ENCODE measurements at regions of chr6 and their contacts with region 1.

Region 1: DNA sequence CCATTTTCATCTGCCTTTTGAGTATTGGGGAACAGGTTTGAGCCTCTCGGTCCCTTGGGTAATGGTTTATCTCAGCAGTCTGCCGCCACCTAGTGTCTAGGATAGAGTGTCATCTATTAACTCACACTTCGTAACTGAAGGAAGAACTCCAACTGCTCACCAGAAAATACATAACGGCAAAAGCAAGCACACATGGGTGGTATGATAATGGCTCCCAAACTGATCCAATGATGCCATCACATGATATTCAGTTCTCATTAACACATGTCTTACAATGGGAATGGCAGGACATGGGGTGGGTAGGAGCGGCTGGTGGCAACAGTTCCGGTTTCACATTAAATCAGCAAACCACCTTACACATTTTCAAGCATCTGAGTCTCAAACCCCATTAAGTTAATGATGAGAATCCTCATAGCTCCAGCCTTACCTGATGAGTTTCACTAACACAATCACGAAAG is 110.7 kb upstream of the PHACTR1 start:
- DNase-seq: peak; percentile 68
- H3K4me3 ChIP-seq: no peak overlapping the region
- H3K27ac ChIP-seq: no peak overlapping the region
- H3K4me1 ChIP-seq: no peaks in the 10 kb centered on the region
- H3K27me3 ChIP-seq: no peaks in the 10 kb centered on the region
- CTCF ChIP-seq: peak; percentile 45

Region 2: DNA sequence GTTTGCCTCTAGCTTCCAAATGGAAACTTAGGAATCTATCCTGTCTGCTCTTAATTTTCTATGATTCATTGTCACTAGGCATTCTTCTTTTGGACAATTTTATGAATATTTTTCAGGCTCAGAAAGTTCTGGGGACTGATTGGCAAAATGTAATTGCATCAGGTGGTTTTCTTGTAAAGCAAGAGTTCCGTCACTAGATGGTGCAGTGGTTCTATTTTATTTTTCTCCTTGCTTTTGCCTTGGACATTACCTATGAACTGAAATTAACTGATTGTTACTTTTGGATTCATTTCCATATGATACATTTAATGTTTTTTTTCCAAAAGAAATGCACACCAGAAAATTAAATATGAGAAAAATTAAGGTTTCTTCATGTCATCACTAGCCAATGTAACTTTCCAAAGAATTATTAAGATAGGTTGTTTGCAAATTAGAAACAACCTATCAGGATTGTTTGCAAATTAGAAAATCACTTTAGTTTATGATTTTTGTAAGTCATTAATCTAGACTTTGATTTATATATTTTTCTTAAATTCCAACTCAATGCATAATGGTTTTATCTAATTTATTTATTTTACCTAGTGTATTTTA is 1020.4 kb before region 1 on chr6:
- intact Hi-C with region 1: loop called (anchors 5 kb)
- DNase-seq: no peak
- H3K4me3 ChIP-seq: no peak overlapping the region
- H3K27ac ChIP-seq: no peak overlapping the region
- H3K4me1 ChIP-seq: no peaks in the 10 kb centered on the region
- H3K27me3 ChIP-seq: no peaks in the 10 kb centered on the region
- CTCF ChIP-seq: peak; percentile 57

Region 3: GRCh38 chr6:12060780-12061619 is 544.9 kb before region 1 on chr6:
- intact Hi-C with region 1: loop called (anchors 10 kb)
- DNase-seq: peak; percentile 42
- H3K4me3 ChIP-seq: no peak overlapping the region
- H3K27ac ChIP-seq: no peak overlapping the region
- H3K4me1 ChIP-seq: no peaks in the 10 kb centered on the region
- H3K27me3 ChIP-seq: no peaks in the 10 kb centered on the region
- CTCF ChIP-seq: no peak

Region 4: DNA sequence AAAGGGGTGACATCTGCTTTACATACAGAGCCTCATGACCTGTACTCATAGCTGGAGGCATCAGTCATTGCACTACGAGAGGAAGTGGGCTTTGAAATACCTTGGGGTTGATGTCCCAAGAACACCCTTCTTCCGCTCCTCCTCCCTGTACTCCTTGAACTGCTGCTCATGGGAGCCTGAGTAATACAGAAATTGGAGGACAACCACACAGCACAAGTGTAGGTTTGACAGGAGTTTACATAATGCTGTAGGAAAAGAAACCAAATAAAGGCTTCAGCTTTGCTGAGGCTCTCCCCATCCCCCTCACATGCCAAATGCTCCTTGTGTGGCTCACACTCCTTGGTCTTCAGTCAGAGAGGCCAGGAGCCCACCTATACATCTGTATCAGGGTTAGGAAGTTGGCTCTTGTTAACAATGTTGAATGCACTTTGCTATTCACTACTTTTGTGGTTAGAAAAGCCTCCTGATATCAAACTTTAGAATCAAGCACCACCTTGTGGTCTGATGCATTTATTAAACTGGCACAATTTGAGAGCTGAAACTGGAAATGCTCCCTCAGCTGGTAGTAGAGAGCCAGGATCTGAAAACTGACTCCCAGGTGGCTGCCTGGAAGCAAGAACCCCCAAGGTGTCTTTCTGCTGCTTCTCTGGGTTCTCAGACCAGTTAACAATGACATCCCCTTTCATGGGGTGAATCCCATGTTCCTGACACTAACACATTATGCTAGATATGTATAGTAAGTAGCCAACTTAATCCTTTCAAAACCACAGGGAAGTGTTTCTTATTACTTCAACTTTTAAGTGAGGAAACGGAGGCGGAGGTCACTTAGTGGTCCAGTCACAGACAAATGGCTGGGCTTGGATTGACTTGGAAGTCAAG is 372.0 kb before region 1 on chr6:
- intact Hi-C with region 1: loop called (anchors 5 kb)
- DNase-seq: peak; percentile 67
- H3K4me3 ChIP-seq: no peak overlapping the region
- H3K27ac ChIP-seq: no peak overlapping the region
- H3K4me1 ChIP-seq: no peaks in the 10 kb centered on the region
- H3K27me3 ChIP-seq: no peaks in the 10 kb centered on the region
- CTCF ChIP-seq: peak; percentile 67

Region 5: DNA sequence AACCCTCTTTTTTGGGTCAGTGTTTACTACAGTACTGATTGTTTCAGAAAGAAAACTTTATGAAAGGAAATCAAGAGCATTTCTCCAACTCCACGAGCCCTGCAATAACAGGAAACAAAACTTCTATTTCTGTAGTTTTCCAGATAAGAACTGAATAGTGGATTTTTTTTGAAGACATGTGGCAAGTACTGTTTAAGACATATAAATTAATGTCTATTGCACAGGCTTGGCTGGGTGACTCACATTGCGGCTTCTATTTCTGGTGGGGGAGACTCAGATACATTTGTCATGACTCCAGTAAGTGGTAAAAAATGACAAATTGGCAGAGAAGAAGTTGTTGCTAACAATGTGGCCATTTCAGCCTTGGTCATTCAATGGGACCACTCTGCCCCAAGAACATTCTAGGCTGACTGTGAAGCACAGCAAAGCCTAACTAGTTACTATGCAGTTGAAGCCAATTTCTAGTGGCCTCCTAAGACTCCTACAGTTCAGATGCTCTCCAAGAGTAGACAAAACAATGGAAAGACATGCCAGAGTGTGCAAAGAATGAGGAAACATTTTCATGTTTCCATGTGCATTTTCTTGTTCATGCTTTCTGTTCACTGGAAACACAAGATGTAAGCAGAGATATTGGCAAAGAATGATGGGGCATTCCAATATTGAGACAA is 114.9 kb before region 1 on chr6:
- intact Hi-C with region 1: loop called (anchors 10 kb)
- DNase-seq: no peak
- H3K4me3 ChIP-seq: no peak overlapping the region
- H3K27ac ChIP-seq: no peak overlapping the region
- H3K4me1 ChIP-seq: no peaks in the 10 kb centered on the region
- H3K27me3 ChIP-seq: no peaks in the 10 kb centered on the region
- CTCF ChIP-seq: no peak

Region 6: DNA sequence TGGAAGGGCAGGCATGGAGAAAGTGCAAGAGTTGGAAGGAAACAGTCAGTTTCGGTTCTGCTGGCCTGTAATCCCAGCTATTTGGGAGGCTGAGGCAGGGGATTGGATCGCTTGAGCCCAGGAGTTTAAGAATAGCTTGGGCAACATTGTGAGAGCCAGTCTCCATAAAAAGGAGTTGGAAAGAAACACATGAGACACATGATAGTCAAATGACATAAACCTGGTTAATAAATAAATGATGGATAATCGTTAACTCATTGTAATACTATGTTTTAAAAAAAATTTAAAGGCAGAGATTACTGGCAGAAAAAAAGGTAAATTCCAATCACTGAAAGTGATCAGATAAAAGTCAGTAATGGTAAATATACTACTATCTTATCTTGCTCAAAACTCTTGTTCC is 73.4 kb after region 1 on chr6:
- intact Hi-C with region 1: no loop called
- DNase-seq: no peak
- H3K4me3 ChIP-seq: no peak overlapping the region
- H3K27ac ChIP-seq: no peak overlapping the region
- H3K4me1 ChIP-seq: no peaks in the 10 kb centered on the region
- H3K27me3 ChIP-seq: no peaks in the 10 kb centered on the region
- CTCF ChIP-seq: no peak

Measured in colonic mucosa (tissue), 4 donors.